PC-9 (cell line): ENCODE measurements at regions of chr16 and their contacts with region 1.

Region 1: GRCh38 chr16:72908362-72909167 is 139.4 kb downstream of the ZFHX3 start:
- DNase-seq: no peak
- H3K4me3 ChIP-seq: no peak overlapping the region
- H3K27ac ChIP-seq: no peak overlapping the region
- H3K4me1 ChIP-seq: no peaks in the 10 kb centered on the region
- H3K27me3 ChIP-seq: no peaks in the 10 kb centered on the region
- CTCF ChIP-seq: no peak

Region 2: GRCh38 chr16:71600822-71601221 is 1307.7 kb before region 1 on chr16:
- CTCF ChIA-PET with region 1: interaction called, 10 read pairs
- POLR2A ChIA-PET with region 1: no interaction called
- intact Hi-C with region 1: no loop called
- DNase-seq: no peak
- H3K4me3 ChIP-seq: no peak overlapping the region
- H3K27ac ChIP-seq: no peak overlapping the region
- H3K4me1 ChIP-seq: peaks cover 9% of the 10 kb centered on the region; the same call in 1 of the 2 replicates
- H3K27me3 ChIP-seq: no peaks in the 10 kb centered on the region
- CTCF ChIP-seq: no peak

Region 3: GRCh38 chr16:72921630-72922029 is 13.1 kb after region 1 on chr16:
- CTCF ChIA-PET with region 1: no interaction called
- POLR2A ChIA-PET with region 1: no interaction called
- intact Hi-C with region 1: no loop called
- DNase-seq: no peak
- H3K4me3 ChIP-seq: no peak overlapping the region
- H3K27ac ChIP-seq: no peak overlapping the region
- H3K4me1 ChIP-seq: peaks cover 8% of the 10 kb centered on the region
- H3K27me3 ChIP-seq: no peaks in the 10 kb centered on the region
- CTCF ChIP-seq: no peak